ENCODE measurements at regions of chr6 and their contacts with region 1.

Region 1: GRCh38 chr6:49606696-49607390 is 29.8 kb downstream of the RHAG start:
- DNase-seq: peak in 5 of 9 donors; percentile 11 to 44 (median 23)
- ATAC-seq: peak; percentile 72
- H3K4me3 ChIP-seq: no peak overlapping the region
- H3K4me3 Mint-ChIP-seq: no peak overlapping the region
- H3K27ac ChIP-seq: no peak overlapping the region
- H3K27ac Mint-ChIP-seq: no peak overlapping the region
- H3K4me1 ChIP-seq: no peaks in the 10 kb centered on the region
- H3K4me1 Mint-ChIP-seq: no peaks in the 10 kb centered on the region
- H3K27me3 ChIP-seq: no peaks in the 10 kb centered on the region
- H3K27me3 Mint-ChIP-seq: peaks cover 0 to 9% (median 6%) of the 10 kb centered on the region in 5 donors

Region 2: DNA sequence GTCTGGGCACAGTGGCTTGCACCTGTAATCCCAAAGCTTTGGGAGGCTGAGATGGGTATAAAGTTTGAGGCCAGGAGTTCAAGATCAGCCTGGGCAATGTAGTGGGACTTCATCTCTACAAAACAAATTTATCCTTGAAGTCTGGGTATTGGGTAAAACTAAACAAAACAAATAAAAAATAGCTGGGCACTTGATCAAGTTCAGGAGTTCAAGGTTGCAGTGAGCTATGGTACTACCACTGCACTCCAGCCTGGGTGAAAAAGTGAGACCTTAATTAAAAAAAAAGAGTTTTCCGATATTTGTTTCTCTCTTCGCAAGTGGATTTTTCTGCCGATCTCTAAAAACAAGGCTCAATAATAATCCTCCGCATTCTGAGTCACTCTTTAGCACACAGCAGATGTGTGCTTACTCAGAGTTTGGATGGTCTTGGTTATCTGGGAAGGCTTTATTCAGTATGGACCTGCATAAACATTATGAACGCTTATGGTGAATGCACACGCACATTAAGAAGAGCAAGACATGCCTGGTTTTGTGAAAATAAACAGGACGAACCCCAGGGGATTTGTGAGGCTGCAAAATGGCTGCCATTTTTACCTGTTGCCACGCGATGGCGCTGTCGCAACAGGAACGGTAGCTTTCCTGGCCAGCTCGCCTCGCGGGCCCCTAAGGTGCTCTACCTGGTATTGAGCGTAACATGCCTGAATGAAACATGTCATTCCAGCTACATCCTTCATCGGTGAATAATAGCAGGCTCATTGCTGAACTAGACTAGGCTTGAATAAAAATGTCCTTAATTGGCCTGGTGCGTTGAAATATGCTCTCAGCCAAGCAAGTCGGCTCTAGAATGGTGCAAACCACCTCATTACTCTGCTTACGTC is 1819.0 kb before region 1 on chr6:
- CTCF ChIA-PET with region 1: no interaction called
- POLR2A ChIA-PET with region 1: no interaction called
- intact Hi-C with region 1: loop called in 1 of 2 experiments (anchors 10 kb)
- DNase-seq: peak; percentile 15 to 54 (median 41)
- ATAC-seq: peak; percentile 75
- H3K4me3 ChIP-seq: no peak overlapping the region
- H3K4me3 Mint-ChIP-seq: peak overlapping the region in 4 of 10 donors; percentile 14 to 58 (median 30)
- H3K27ac ChIP-seq: no peak overlapping the region
- H3K27ac Mint-ChIP-seq: no peak overlapping the region
- H3K4me1 ChIP-seq: no peaks in the 10 kb centered on the region
- H3K4me1 Mint-ChIP-seq: peaks cover 0 to 6% (median 0%) of the 10 kb centered on the region in 7 donors
- H3K27me3 ChIP-seq: no peaks in the 10 kb centered on the region
- H3K27me3 Mint-ChIP-seq: peaks cover 26 to 55% (median 43%) of the 10 kb centered on the region in 5 donors

Region 3: DNA sequence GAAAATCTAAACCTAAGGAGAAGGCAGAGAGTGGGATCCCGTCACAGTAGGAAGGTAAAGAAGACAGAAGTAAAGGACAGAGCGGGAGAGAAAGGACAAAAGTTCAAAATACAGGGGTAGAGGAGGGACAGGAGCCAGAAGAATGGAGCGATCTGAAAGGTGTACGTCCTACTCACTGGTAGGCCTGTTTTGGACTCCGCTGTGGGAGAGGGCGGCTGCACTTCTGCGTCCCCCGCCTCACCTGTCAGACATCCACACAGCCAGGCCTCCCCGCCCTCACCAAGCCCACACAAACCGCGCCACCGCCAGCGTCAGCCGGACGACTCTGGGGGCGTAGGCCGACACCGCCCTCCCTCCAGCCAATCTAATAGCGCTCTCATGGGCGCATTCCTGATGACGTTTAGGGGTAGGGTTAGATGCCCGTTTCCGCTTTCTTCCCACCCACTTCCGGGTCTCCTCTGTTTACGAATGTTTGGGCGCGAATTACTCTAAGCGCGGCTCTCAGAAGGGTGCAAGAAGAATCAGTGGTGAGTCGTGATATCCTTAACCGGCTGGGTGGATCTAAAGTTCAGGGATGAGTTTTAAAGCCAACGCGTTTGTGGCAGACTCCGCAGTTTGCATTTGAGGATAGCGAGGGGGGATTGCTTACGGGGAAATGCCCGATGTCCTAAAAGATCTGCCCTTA is 143.8 kb before region 1 on chr6 and contains the starts of genes CENPQ and MMUT:
- CTCF ChIA-PET with region 1: no interaction called
- POLR2A ChIA-PET with region 1: no interaction called
- intact Hi-C with region 1: loop called in 1 of 2 experiments (anchors 1 kb)
- DNase-seq: peak; percentile 85 to 94 (median 92)
- ATAC-seq: peak; percentile 99
- H3K4me3 ChIP-seq: peak within 1 kb of the TSS; percentile 68
- H3K4me3 Mint-ChIP-seq: peak within 1 kb of the TSS; percentile 94 to 100 (median 98)
- H3K27ac ChIP-seq: peak within 1 kb of the TSS; percentile 85
- H3K27ac Mint-ChIP-seq: peak within 1 kb of the TSS; percentile 91 to 99 (median 96)
- H3K4me1 ChIP-seq: peaks cover 14 to 15% of the 10 kb centered on the region in 2 donors
- H3K4me1 Mint-ChIP-seq: peaks cover 43 to 80% (median 57%) of the 10 kb centered on the region in 7 donors
- H3K27me3 ChIP-seq: no peaks in the 10 kb centered on the region
- H3K27me3 Mint-ChIP-seq: no peaks in the 10 kb centered on the region
- total RNA-seq, gene CENPQ: 1.2 to 11.4 (median 5.0) TPM
- total RNA-seq, gene MMUT: 6.5 to 15.4 (median 12.5) TPM

Region 4: DNA sequence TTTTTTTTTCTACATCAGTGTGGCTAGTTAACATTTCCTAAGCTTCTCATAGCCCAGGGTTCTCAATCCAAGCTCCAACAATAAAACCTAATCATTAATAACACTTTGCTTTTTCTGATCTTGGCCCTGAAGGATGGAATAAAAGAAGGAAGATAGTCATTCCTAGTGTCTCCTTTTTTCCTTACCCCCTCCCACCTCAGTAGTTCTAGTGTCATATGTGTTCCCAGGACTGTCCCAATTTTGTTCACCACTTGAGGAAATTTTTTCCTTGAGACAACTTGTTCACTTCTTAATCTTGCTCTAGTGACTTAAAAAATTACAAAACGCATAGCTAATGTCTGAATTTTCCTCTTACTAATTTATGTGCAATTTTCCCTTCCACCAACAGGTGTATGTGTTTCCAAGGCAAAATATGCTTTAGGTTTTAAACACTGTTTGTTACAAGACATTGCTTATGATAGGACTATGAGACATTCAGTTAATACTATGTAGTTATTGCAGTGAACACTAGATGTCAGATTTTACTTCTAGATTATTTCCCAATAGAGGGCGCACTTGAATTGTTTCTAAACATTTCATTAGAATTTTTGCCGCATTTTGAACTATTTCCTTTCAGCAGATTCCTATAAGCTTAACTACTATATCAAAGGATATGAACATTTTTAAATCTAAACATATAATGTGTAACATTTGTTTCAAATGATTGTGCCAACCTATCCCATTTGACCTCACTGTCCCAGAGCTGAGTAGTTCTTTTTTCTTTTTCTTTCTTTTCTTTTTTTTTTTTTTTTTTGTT is 74.9 kb before region 1 on chr6:
- CTCF ChIA-PET with region 1: interaction called, 4 read pairs
- POLR2A ChIA-PET with region 1: no interaction called
- intact Hi-C with region 1: loop called (anchors 1 kb)
- DNase-seq: peak in 6 of 9 donors; percentile 7 to 28 (median 20)
- ATAC-seq: peak; percentile 81
- H3K4me3 ChIP-seq: no peak overlapping the region
- H3K4me3 Mint-ChIP-seq: peak overlapping the region in 3 of 10 donors; percentile 16 to 32 (median 27)
- H3K27ac ChIP-seq: no peak overlapping the region
- H3K27ac Mint-ChIP-seq: no peak overlapping the region
- H3K4me1 ChIP-seq: no peaks in the 10 kb centered on the region
- H3K4me1 Mint-ChIP-seq: peaks cover 0 to 5% (median 0%) of the 10 kb centered on the region in 7 donors
- H3K27me3 ChIP-seq: no peaks in the 10 kb centered on the region
- H3K27me3 Mint-ChIP-seq: peaks cover 20 to 23% (median 22%) of the 10 kb centered on the region in 5 donors

Region 5: GRCh38 chr6:49570474-49571079 is 36.3 kb before region 1 on chr6:
- CTCF ChIA-PET with region 1: no interaction called
- POLR2A ChIA-PET with region 1: no interaction called
- intact Hi-C with region 1: no loop called
- DNase-seq: no peak
- ATAC-seq: no peak
- H3K4me3 ChIP-seq: no peak overlapping the region
- H3K4me3 Mint-ChIP-seq: no peak overlapping the region
- H3K27ac ChIP-seq: no peak overlapping the region
- H3K27ac Mint-ChIP-seq: no peak overlapping the region
- H3K4me1 ChIP-seq: no peaks in the 10 kb centered on the region
- H3K4me1 Mint-ChIP-seq: peaks cover 0 to 8% (median 0%) of the 10 kb centered on the region in 7 donors
- H3K27me3 ChIP-seq: no peaks in the 10 kb centered on the region
- H3K27me3 Mint-ChIP-seq: peaks cover 0 to 18% (median 10%) of the 10 kb centered on the region in 5 donors

Region 6: DNA sequence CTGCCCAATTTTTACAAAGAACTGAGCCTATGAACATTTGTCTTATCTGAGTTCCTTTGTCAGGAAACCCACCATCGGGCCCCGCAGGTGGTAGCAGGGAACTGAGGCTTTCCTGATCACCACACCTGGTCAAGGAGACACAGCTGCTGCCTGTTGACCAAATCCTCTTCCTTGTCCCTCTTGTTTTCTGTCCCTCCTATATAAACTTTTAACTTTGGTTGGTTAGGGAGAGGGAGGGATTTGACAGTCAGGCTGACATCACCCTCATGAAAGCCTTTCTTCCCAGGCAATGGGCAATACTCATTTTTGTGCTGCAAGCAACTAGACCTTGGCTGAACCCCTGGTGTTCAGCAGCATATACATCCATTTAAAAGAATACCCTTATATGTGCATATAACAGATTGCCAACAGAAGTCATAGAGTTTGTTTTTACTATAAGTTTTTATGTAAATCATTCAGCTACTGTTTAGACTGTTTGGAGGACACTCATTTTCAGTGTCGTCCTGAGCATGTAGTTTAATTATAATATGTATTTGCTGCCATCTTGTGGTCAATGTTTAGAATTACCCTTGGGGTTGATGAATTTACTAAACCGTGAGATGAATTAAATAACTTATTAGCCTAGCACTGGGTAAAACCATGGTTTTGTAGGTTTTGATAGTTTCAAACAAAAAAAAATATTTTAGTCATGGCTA is 242.5 kb after region 1 on chr6:
- CTCF ChIA-PET with region 1: no interaction called
- POLR2A ChIA-PET with region 1: no interaction called
- intact Hi-C with region 1: loop called in 1 of 2 experiments (anchors 5 kb)
- DNase-seq: peak in 6 of 9 donors; percentile 1 to 30 (median 14)
- ATAC-seq: peak; percentile 58
- H3K4me3 ChIP-seq: no peak overlapping the region
- H3K4me3 Mint-ChIP-seq: no peak overlapping the region
- H3K27ac ChIP-seq: no peak overlapping the region
- H3K27ac Mint-ChIP-seq: no peak overlapping the region
- H3K4me1 ChIP-seq: no peaks in the 10 kb centered on the region
- H3K4me1 Mint-ChIP-seq: no peaks in the 10 kb centered on the region
- H3K27me3 ChIP-seq: no peaks in the 10 kb centered on the region
- H3K27me3 Mint-ChIP-seq: peaks cover 0 to 8% (median 0%) of the 10 kb centered on the region in 5 donors